ENCODE measurements at regions of chr7 and their contacts with region 1.

Region 1: DNA sequence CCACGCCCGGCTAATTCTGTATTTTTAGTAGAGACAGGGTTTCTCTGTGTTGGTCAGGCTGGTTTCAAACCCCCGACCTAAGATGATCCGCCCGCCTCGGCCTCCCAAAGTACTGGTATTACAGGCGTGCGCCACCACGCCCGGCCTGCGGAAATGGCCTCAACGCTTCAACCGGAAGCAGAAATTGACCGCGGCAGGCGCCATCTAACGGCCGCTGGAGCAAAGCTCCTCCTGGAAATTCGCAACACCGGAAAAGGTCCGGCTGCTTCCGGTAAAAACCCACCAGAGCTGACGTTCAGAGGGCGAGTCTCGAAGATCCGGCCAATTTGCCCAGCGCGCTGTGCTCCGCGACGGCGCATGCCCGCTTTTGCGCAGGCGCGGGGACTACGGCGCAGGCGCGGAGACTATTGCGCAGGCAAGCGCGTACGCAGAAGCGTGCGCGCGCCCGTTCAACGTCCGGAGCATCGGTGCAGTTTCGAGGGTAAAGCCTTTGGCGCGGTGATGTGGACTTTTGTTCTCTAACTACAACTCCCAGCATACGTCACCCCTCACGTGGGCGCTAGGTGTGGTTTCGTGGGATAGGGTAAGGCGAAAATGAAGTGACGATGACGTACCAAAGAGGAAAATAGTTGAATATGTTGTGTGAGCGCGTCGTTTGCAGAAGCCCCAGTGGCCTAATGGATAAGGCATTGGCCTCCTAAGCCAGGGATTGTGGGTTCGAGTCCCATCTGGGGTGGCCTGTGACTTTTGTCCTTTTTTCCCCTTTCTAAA is 915 bp upstream of the FMC1 start:
- DNase-seq: peak; percentile 99 to 100 (median 100)
- H3K4me3 ChIP-seq: peak overlapping the region; percentile 89 to 96 (median 91)
- H3K4me3 Mint-ChIP-seq: peak overlapping the region; percentile 92 to 93
- H3K27ac ChIP-seq: peak overlapping the region; percentile 98 to 99
- H3K27ac Mint-ChIP-seq: peak overlapping the region; percentile 97 to 99 (median 99)
- H3K4me1 ChIP-seq: peaks cover 9 to 16% of the 10 kb centered on the region in 2 donors
- H3K4me1 Mint-ChIP-seq: peaks cover 8% of the 10 kb centered on the region
- H3K27me3 ChIP-seq: no peaks in the 10 kb centered on the region
- H3K27me3 Mint-ChIP-seq: peaks cover 0 to 7% (median 0%) of the 10 kb centered on the region in 3 donors
- CTCF ChIP-seq: peak; percentile 66

Region 2: GRCh38 chr7:139118234-139118804 is 221.9 kb before region 1 on chr7:
- intact Hi-C with region 1: loop called in 1 of 2 experiments (anchors 10 kb)
- DNase-seq: peak; percentile 36 to 89 (median 74)
- H3K4me3 ChIP-seq: peak overlapping the region; percentile 13 to 70 (median 67)
- H3K4me3 Mint-ChIP-seq: peak overlapping the region; percentile 63 to 94
- H3K27ac ChIP-seq: peak overlapping the region; percentile 43 to 71
- H3K27ac Mint-ChIP-seq: peak overlapping the region; percentile 42 to 93 (median 89)
- H3K4me1 ChIP-seq: peaks cover 23 to 28% of the 10 kb centered on the region in 2 donors
- H3K4me1 Mint-ChIP-seq: peaks cover 27% of the 10 kb centered on the region
- H3K27me3 ChIP-seq: no peaks in the 10 kb centered on the region
- H3K27me3 Mint-ChIP-seq: peaks cover 0 to 10% (median 3%) of the 10 kb centered on the region in 3 donors
- CTCF ChIP-seq: no peak

Region 3: DNA sequence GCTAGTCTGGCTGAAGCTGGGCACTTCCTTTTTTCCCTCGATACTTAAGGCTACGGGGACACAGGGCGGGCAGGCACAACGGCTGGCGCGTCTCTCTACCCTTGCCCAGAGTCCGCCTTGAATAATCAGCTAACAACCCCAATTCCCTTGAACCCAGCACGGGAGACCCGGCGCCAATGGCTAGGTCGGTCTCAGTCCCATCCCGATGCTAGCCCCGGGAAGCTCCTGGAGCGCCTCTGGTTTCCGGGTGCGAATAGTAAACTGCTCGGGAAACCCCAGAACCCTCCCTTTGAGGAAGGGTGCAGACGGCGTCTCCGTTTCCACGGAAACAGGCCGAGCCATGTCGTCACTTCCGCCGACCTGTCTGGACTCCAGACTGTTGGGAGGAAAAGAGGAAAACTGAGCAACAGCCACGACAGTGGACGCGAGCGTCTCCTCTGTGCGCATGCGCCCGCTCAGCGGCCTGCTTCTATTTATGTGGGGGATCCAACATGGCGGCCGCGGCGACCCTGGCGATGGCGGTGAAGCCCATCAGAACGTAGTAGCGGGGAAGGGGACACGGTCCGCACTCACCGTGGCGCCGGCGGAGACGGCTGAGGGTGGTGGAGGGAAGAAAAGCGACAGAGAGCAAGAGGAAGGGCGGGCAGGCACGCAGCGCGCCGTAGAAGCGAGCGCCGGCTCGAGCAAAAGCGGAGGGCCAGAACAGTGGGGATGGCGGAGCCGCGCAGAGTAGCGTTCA is 109.3 kb before region 1 on chr7 and contains the start of gene UBN2:
- intact Hi-C with region 1: loop called in 1 of 2 experiments (anchors 5 kb)
- DNase-seq: peak; percentile 97 to 100 (median 99)
- H3K4me3 ChIP-seq: peak within 1 kb of the TSS; percentile 89 to 100 (median 93)
- H3K4me3 Mint-ChIP-seq: peak within 1 kb of the TSS; percentile 100
- H3K27ac ChIP-seq: peak within 1 kb of the TSS; percentile 86 to 87
- H3K27ac Mint-ChIP-seq: peak within 1 kb of the TSS; percentile 94 to 99 (median 97)
- H3K4me1 ChIP-seq: peaks cover 14 to 23% of the 10 kb centered on the region in 2 donors
- H3K4me1 Mint-ChIP-seq: peaks cover 25% of the 10 kb centered on the region
- H3K27me3 ChIP-seq: no peaks in the 10 kb centered on the region
- H3K27me3 Mint-ChIP-seq: peaks cover 0 to 8% (median 0%) of the 10 kb centered on the region in 3 donors
- CTCF ChIP-seq: no peak
- polyA plus RNA-seq, gene UBN2: 0.80 to 4.2 (median 1.6) TPM

Region 4: DNA sequence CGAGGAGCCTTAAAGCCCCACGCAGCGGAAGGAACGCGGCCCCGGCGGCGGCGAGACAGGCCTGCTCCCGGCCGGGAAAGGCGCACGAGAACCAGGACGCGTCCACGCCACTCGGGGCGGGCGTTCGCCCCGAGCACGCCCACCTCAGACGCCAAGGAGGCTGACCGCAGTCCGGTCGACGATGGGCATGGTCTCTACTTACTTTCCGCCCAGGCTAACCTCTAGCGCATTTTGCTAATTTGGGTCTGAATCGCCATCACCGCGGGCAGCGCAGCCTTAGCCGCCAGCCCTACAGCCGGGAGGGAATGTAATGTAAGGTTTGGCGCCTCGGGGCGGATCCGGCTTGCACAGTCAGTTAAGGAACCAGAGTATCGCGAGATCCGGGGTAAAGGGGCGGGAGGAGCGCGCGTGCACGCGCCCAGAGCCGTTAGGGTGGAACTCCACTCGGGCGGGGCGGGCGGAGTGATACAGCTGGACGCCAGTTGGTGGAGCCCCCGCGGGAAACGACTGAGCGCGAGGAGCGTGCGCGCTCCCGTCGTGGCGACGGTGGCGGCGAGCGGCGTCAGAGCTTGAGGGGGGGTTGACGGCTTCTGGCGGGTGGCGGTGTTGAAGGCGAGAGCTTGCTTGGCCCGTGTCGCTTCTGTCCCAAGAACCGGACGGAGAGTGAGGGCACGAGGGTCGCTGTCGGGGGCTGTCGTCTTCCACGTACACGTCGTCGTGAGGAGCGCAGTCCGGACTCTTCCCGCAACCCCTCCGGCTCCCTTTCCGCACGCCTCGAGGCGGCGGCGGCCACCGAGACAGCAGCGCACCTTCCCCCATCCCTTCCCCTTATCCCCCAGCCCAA is 19.4 kb after region 1 on chr7 and contains the start of gene LUC7L2:
- intact Hi-C with region 1: loop called (anchors 1 to 2 kb)
- DNase-seq: peak; percentile 98 to 99 (median 99)
- H3K4me3 ChIP-seq: peak within 1 kb of the TSS; percentile 46 to 93 (median 92)
- H3K4me3 Mint-ChIP-seq: peak within 1 kb of the TSS; percentile 97 to 98
- H3K27ac ChIP-seq: peak within 1 kb of the TSS; percentile 94 to 100
- H3K27ac Mint-ChIP-seq: peak within 1 kb of the TSS; percentile 95 to 99 (median 99)
- H3K4me1 ChIP-seq: peaks cover 28 to 55% of the 10 kb centered on the region in 2 donors
- H3K4me1 Mint-ChIP-seq: peaks cover 40% of the 10 kb centered on the region
- H3K27me3 ChIP-seq: no peaks in the 10 kb centered on the region
- H3K27me3 Mint-ChIP-seq: no peaks in the 10 kb centered on the region
- CTCF ChIP-seq: no peak
- polyA plus RNA-seq, gene LUC7L2: 24.7 to 54.5 (median 26.8) TPM

Measured in CD14-positive monocyte (primary cell).